K562 (cell line): ENCODE measurements at regions of chrX and their contacts with region 1.

Region 1: GRCh38 chrX:10133980-10134676 is 22.6 kb upstream of the CLCN4 start:
- DNase-seq: peak; percentile 15 to 59 (median 36)
- ATAC-seq: peak; percentile 90
- H3K4me3 ChIP-seq: no peak overlapping the region; the same call in 1 of the 2 replicates
- H3K27ac ChIP-seq: peak overlapping the region; percentile 40; the same call in 2 of the 3 replicates
- H3K4me1 ChIP-seq: peaks cover 0 to 11% of the 10 kb centered on the region in 2 experiments; a peak in 4 of 5 replicates
- H3K27me3 ChIP-seq: peaks cover 0 to 4% of the 10 kb centered on the region in 2 experiments; a peak in 1 of 5 replicates
- CTCF ChIP-seq: peak; percentile 61 to 64 (median 62)
- EP300 ChIP-seq: no peak
- POLR2A ChIP-seq: no peak
- RAD21 ChIP-seq: peak; percentile 77 to 78

Region 2: DNA sequence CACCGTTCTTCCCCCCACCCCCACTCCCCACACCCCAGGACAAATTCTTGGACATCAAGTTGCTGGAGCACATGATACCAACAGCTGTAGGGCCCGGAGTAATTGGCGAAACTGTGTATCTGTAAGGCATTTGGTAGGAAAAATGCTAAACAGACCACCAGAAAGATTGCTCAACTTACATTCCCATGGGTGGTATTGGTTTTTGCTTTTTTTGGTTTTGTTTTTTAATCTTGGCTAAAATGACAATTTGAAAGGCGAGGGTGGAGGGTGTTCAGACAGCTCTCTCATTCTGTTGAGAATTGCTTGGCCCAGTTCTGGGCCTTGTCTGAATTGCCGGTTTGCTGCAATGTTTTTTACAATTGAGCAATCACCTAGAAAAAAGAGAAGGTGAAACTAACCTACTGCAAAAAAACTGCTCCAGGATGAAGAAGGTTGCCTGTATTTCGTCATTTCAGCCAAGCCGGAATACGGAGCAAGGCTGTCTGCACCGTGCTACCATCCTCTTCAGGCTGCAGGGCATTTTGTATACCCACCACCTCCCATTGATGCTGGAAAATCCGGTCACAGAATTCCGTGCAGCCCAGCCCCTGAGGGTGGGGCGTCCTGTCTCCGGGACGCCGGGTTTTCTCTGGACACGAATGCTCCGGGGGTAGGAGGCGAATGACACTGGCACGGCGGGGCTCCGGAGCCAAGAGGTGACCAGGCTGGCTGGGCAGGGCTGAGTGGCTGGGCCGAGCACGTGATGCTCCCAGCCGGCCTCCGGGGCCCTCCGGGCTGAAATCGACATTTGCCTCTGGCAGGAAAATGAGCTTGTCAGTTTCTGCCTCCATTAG is 22.3 kb after region 1 on chrX and contains the start of gene CLCN4:
- CTCF ChIA-PET with region 1: no interaction called
- POLR2A ChIA-PET with region 1: no interaction called
- in situ Hi-C with region 1: no loop called
- intact Hi-C with region 1: loop called (anchors 1 kb)
- DNase-seq: no peak
- ATAC-seq: no peak
- H3K4me3 ChIP-seq: no peak within 1 kb of the TSS
- H3K27ac ChIP-seq: no peak within 1 kb of the TSS
- H3K4me1 ChIP-seq: peaks cover 13 to 19% of the 10 kb centered on the region in 2 experiments; a peak in 4 of 5 replicates
- H3K27me3 ChIP-seq: no peaks in the 10 kb centered on the region
- CTCF ChIP-seq: no peak
- EP300 ChIP-seq: no peak
- POLR2A ChIP-seq: no peak
- RAD21 ChIP-seq: no peak
- polyA plus RNA-seq, gene CLCN4: 0.03 to 0.24 TPM

Region 3: GRCh38 chrX:10326578-10326977 is 192.4 kb after region 1 on chrX:
- CTCF ChIA-PET with region 1: no interaction called
- POLR2A ChIA-PET with region 1: no interaction called
- in situ Hi-C with region 1: no loop called
- intact Hi-C with region 1: loop called (anchors 5 kb)
- DNase-seq: peak in 1 of 4 experiments; percentile 2
- ATAC-seq: peak; percentile 69
- H3K4me3 ChIP-seq: no peak overlapping the region
- H3K27ac ChIP-seq: no peak overlapping the region
- H3K4me1 ChIP-seq: no peaks in the 10 kb centered on the region; a peak in 1 of 5 replicates
- H3K27me3 ChIP-seq: no peaks in the 10 kb centered on the region
- CTCF ChIP-seq: peak; percentile 25 to 35 (median 30); a peak in 5 of 6 replicates
- EP300 ChIP-seq: no peak
- POLR2A ChIP-seq: no peak
- RAD21 ChIP-seq: peak; percentile 33 to 43

Region 4: DNA sequence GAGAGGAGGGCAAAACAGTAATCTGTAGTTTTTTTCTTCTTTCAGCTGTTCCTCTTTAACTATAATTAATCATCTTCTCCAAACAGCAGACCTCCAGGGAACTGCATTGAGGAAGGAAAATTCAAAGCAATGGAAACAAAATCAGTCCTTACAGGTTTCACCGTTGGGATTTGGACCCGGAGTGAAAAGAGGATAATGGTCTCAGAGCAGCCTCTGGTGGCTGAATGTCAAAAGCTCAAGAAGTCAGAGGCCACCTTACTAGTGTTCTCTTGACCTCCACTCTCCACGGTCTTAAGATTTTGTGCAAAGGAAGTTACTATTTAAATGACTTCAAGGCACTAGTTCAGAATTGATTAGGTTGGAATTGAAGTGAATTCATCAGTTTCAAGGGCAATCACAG is 502.2 kb after region 1 on chrX:
- CTCF ChIA-PET with region 1: no interaction called
- POLR2A ChIA-PET with region 1: no interaction called
- in situ Hi-C with region 1: no loop called
- intact Hi-C with region 1: loop called (anchors 10 kb)
- DNase-seq: peak; percentile 6 to 16 (median 10)
- ATAC-seq: 0 out of 3 replicates have a peak, but pooled peaks have one; percentile 35
- H3K4me3 ChIP-seq: no peak overlapping the region
- H3K27ac ChIP-seq: no peak overlapping the region
- H3K4me1 ChIP-seq: no peaks in the 10 kb centered on the region
- H3K27me3 ChIP-seq: no peaks in the 10 kb centered on the region
- CTCF ChIP-seq: peak; percentile 48 to 60 (median 52)
- EP300 ChIP-seq: no peak
- POLR2A ChIP-seq: no peak
- RAD21 ChIP-seq: peak; percentile 57 to 60

Region 5: DNA sequence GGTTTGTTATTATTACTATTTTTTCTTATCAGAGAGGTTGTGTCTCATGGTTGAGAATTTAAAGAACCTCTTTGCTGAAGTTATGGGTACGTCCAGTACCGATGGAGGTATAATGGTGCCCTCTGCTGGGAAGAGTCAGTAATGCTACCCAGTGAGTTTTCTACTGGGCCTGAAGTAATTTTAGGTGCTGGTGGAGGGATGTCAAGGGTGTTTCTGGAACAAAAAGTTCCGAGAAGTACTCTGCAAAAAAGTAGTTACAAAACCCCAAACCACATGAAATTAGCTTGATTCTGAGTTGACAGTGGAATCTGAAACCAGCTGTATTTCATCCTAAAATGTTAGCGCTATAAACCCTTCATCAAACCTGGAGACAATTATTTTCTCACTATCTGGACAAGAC is 588.7 kb after region 1 on chrX:
- CTCF ChIA-PET with region 1: no interaction called
- POLR2A ChIA-PET with region 1: no interaction called
- in situ Hi-C with region 1: no loop called
- intact Hi-C with region 1: loop called (anchors 2 kb)
- DNase-seq: peak; percentile 47 to 57 (median 50)
- ATAC-seq: peak; percentile 86
- H3K4me3 ChIP-seq: no peak overlapping the region
- H3K27ac ChIP-seq: no peak overlapping the region
- H3K4me1 ChIP-seq: no peaks in the 10 kb centered on the region
- H3K27me3 ChIP-seq: no peaks in the 10 kb centered on the region
- CTCF ChIP-seq: peak; percentile 54 to 68 (median 64)
- EP300 ChIP-seq: no peak
- POLR2A ChIP-seq: no peak
- RAD21 ChIP-seq: peak; percentile 50 to 66